ENCODE measurements at regions of chr6 and their contacts with region 1.

Region 1: DNA sequence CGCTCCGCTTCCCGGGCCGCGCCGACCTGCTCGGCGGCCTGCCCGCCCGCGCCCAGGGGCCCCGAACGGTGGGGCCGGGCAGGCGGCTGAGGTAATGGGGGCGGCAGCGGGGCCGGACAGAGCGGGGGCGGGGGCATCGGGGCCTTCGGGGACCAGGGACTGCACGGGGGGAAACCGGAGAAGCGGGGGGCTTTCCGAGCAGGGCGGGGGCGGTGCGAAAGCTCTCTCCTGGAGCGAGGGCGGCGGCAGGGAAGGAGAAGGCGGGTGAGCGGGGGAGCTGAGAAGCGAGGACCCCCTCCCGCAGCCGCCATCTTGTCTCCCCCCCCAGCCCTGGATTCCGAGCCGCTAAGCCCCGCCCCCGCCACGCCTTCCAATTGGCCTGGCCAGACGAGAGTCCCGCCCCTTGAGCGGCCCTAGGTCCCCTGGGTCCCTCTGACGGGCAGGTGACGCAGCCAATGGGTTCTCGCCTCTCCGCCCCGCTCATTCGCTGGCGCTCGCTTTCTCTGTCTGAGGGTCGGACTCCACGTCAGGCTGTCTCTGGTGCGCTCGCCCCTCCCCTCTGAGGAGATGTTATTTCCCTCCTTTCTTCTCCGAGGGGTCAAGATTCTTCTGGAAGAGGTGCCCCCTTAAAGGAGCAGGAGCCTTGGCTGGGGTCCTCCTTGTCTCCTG is 470 bp downstream of the BRPF3 start:
- DNase-seq: peak; percentile 99 to 100 (median 100)
- H3K4me3 ChIP-seq: peak overlapping the region in 3 of 4 donors; percentile 50 to 92 (median 74)
- H3K27ac ChIP-seq: peak overlapping the region; percentile 47 to 99 (median 92)
- H3K4me1 ChIP-seq: peaks cover 13 to 36% of the 10 kb centered on the region in 2 donors
- H3K27me3 ChIP-seq: no peaks in the 10 kb centered on the region
- CTCF ChIP-seq: no peak
- POLR2A ChIP-seq: peak; percentile 2 to 59

Region 2: DNA sequence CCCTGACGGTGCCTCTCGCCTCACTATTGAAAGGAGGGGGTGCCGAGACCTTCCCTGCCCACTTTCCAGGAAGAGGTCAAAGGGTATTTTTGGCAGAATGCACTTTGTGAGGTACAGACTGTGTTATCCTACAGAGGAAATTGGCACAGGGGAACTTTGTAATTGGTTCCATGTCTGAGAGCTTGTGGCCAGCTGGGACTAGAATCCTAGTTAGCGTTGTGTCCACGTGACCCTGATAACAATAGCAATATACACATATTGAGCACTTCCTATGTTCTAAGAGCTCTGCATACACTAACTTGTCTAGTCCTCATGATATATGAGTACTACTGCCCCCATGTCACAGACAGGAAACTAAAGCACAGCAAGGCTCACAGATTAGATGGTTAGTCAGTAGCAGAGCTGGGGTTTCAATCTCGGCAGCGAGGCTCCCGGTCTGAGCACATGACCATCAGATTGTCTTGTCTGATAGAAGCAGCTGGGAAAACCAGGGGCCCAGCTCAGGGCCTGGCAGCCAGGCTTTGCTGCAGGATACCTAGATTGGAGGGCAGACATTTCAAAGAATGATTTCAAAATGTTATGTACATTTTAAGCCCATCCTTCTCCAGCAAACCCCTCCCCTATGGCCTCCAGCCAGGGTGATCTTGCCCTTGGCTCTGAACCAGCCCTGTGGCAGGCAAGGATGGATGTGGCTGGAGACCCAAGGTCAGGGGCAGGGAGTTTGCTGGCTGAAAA is 65.3 kb before region 1 on chr6:
- intact Hi-C with region 1: loop called (anchors 5 to 10 kb)
- DNase-seq: peak; percentile 89 to 96 (median 93)
- H3K4me3 ChIP-seq: peak overlapping the region in 2 of 4 donors; percentile 20 to 55
- H3K27ac ChIP-seq: peak overlapping the region; percentile 74 to 97 (median 93)
- H3K4me1 ChIP-seq: peaks cover 50 to 77% of the 10 kb centered on the region in 2 donors
- H3K27me3 ChIP-seq: no peaks in the 10 kb centered on the region
- CTCF ChIP-seq: no peak
- POLR2A ChIP-seq: peak in 1 of 2 donors; percentile 74

Region 3: DNA sequence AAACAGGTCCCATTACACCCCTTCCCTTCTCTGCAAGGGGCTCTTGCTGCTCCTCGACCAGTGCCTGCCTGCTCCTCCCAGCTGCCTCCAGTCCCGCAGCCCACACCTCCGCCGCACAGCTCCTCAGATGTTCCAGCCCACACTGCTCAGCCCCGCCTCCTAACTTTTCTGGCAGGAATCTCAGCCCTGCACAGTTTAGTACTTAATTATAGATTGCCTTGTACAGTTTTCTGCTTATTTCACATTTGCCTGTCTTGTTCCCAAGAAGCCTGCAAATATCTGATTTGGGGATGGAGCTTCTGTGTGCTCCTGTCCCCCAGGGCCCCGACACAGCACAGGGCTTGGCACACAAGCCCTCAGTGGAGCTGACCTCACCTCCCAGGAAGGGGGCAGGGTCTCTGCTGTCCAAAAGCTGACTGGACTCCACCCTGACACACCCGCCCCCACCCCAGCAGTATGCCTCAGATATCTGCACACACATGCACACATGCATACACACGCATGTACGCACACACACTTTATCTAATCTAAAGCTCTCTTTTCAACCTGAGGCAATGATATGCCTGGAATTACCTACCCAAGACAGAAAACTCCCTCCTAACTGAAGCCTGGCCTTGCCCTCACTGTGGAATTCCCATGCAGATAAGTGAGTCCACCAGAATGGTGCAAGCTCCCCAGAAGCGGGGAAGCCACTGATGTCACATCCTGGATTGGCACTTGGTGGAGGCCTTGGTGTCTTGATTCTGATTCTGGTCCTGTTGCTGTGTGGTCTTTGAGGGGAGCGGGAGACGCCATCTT is 71.7 kb after region 1 on chr6:
- intact Hi-C with region 1: no loop called
- DNase-seq: peak in 6 of 7 donors; percentile 69 to 79 (median 74)
- H3K4me3 ChIP-seq: no peak overlapping the region
- H3K27ac ChIP-seq: no peak overlapping the region
- H3K4me1 ChIP-seq: no peaks in the 10 kb centered on the region
- H3K27me3 ChIP-seq: no peaks in the 10 kb centered on the region
- CTCF ChIP-seq: no peak
- POLR2A ChIP-seq: no peak

Region 4: GRCh38 chr6:36399970-36400369 is 203.0 kb after region 1 on chr6:
- intact Hi-C with region 1: no loop called
- DNase-seq: no peak
- H3K4me3 ChIP-seq: no peak overlapping the region
- H3K27ac ChIP-seq: no peak overlapping the region
- H3K4me1 ChIP-seq: no peaks in the 10 kb centered on the region
- H3K27me3 ChIP-seq: no peaks in the 10 kb centered on the region
- CTCF ChIP-seq: no peak
- POLR2A ChIP-seq: no peak